Activated T-helper 1 cell treated with anti-CD3 and anti-CD28 coated beads, Interleukin-12 subunit alpha, Interleukin-12 subunit beta, Interleukin-2, Interleukin-4 antibody, amounts not matched to agents 30 ng/mL and 10 ng/mL and 1 ng/mL, durations not matched to agents 14 hours and 24 hours and 36 hours (primary cell): ENCODE measurements at regions of chr3 and their contacts with region 1.

Region 1: GRCh38 chr3:141105828-141106628 is 54.9 kb downstream of the SPSB4 start:
- DNase-seq: peak; percentile 42
- H3K4me3 Mint-ChIP-seq: no peak overlapping the region
- H3K27ac Mint-ChIP-seq: no peak overlapping the region
- H3K4me1 Mint-ChIP-seq: no peaks in the 10 kb centered on the region
- H3K27me3 Mint-ChIP-seq: peaks cover 3% of the 10 kb centered on the region

Region 2: GRCh38 chr3:141000027-141000663 is 105.9 kb before region 1 on chr3:
- intact Hi-C with region 1: loop called (anchors 1 kb)
- DNase-seq: peak; percentile 29
- H3K4me3 Mint-ChIP-seq: no peak overlapping the region
- H3K27ac Mint-ChIP-seq: no peak overlapping the region
- H3K4me1 Mint-ChIP-seq: peaks cover 5% of the 10 kb centered on the region
- H3K27me3 Mint-ChIP-seq: peaks cover 5% of the 10 kb centered on the region

Region 3: DNA sequence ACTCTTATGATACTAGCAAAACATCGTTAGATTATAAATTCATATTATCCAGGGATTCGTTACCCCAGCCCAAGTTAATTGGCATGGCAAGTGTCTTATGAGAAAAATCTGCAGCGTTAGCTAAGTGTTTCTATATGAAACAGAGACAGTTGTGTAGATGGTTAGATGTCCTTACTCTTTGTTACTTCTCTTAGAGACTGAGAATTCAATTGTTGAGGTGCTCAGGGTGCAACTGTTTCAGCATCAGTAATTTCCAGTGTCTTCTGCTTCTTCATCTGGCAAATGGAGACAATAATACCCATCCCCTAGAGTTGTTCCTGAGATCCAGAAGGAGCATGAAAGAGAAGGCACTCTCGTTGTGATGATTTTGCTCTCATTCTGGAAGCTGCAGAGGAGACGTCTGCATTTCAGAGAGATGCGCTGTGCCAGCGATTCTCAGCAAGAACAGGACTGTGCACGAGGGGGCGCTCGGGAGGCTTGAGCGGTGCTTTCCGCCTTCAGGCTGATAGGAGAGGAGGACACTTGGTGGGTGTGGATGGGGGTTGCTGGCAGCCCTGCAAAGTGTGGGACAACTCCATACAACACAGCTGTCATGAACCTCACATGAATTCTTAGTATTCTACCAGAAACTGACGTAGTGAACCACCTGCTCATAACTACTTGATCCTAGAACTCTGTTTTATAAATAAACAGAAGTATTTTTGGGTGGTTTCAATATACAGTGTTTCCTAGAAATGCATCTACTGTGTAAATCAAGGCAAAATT is 94.6 kb before region 1 on chr3:
- intact Hi-C with region 1: loop called (anchors 1 kb)
- DNase-seq: peak; percentile 64
- H3K4me3 Mint-ChIP-seq: no peak overlapping the region
- H3K27ac Mint-ChIP-seq: peak overlapping the region; percentile 25
- H3K4me1 Mint-ChIP-seq: peaks cover 11% of the 10 kb centered on the region
- H3K27me3 Mint-ChIP-seq: peaks cover 22% of the 10 kb centered on the region

Region 4: GRCh38 chr3:141530133-141530768 is 424.2 kb after region 1 on chr3:
- intact Hi-C with region 1: no loop called
- DNase-seq: no peak
- H3K4me3 Mint-ChIP-seq: peak overlapping the region; percentile 27
- H3K27ac Mint-ChIP-seq: peak overlapping the region; percentile 77
- H3K4me1 Mint-ChIP-seq: peaks cover 59% of the 10 kb centered on the region
- H3K27me3 Mint-ChIP-seq: no peaks in the 10 kb centered on the region